ENCODE measurements at regions of chr3 and their contacts with region 1.

Region 1: GRCh38 chr3:31918179-31919168 is 62.6 kb downstream of the OSBPL10 start:
- DNase-seq: no peak
- H3K4me3 Mint-ChIP-seq: peak overlapping the region; percentile 43
- H3K27ac Mint-ChIP-seq: peak overlapping the region; percentile 31
- H3K4me1 Mint-ChIP-seq: peaks cover 53% of the 10 kb centered on the region
- H3K27me3 Mint-ChIP-seq: no peaks in the 10 kb centered on the region
- CTCF ChIP-seq: no peak

Region 2: DNA sequence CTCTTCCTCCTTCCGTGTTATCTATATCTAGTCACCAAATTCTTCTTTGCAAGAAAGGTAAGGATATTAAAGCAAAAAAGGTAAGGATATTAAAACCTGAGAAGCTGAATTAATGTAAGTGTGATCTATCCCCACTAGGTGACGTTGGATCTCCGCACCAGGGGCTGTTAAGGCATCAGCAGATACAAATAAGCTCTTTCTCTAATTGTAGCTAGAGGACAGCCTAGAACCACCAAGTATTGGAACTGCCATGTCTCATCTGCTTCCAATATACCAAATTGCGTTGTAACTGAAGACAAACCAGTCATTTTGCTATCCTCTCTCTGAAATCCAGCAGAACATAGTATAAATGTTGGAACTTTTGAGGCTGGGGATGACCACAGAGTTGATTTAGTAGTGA is 1783.3 kb before region 1 on chr3:
- CTCF ChIA-PET with region 1: no interaction called
- intact Hi-C with region 1: no loop called
- DNase-seq: no peak
- H3K4me3 Mint-ChIP-seq: no peak overlapping the region
- H3K27ac Mint-ChIP-seq: no peak overlapping the region
- H3K4me1 Mint-ChIP-seq: no peaks in the 10 kb centered on the region
- H3K27me3 Mint-ChIP-seq: no peaks in the 10 kb centered on the region
- CTCF ChIP-seq: no peak

Region 3: GRCh38 chr3:31671976-31672375 is 246.5 kb before region 1 on chr3:
- CTCF ChIA-PET with region 1: interaction called, 12 read pairs
- intact Hi-C with region 1: no loop called
- DNase-seq: no peak
- H3K4me3 Mint-ChIP-seq: no peak overlapping the region
- H3K27ac Mint-ChIP-seq: no peak overlapping the region
- H3K4me1 Mint-ChIP-seq: peaks cover 7% of the 10 kb centered on the region
- H3K27me3 Mint-ChIP-seq: no peaks in the 10 kb centered on the region
- CTCF ChIP-seq: no peak

Region 4: GRCh38 chr3:31704591-31705179 is 213.8 kb before region 1 on chr3:
- CTCF ChIA-PET with region 1: no interaction called
- intact Hi-C with region 1: no loop called
- DNase-seq: peak; percentile 82
- H3K4me3 Mint-ChIP-seq: peak overlapping the region; percentile 57
- H3K27ac Mint-ChIP-seq: peak overlapping the region; percentile 61
- H3K4me1 Mint-ChIP-seq: peaks cover 21% of the 10 kb centered on the region
- H3K27me3 Mint-ChIP-seq: no peaks in the 10 kb centered on the region
- CTCF ChIP-seq: no peak

Region 5: DNA sequence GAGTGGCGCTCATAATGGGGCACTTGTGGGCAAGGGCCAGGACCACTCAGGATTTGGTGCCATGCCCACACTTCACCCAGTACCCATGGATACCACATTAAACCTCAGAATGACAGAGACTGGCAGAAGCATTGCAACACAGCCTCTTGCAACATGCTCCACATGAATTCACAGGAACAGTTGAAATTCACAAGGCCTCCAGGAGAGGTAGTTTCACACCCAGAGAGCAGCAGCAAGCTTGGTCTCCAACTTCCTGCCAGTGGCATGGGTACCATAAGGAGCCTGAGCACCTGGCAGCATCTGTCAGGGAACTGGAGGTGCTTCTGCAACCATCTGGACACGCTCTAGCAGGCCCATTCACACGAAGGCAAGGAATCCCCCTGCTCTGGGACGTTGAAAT is 38.5 kb before region 1 on chr3:
- CTCF ChIA-PET with region 1: no interaction called
- intact Hi-C with region 1: no loop called
- DNase-seq: peak; percentile 18
- H3K4me3 Mint-ChIP-seq: no peak overlapping the region
- H3K27ac Mint-ChIP-seq: no peak overlapping the region
- H3K4me1 Mint-ChIP-seq: peaks cover 25% of the 10 kb centered on the region
- H3K27me3 Mint-ChIP-seq: no peaks in the 10 kb centered on the region
- CTCF ChIP-seq: no peak

Region 6: GRCh38 chr3:31981206-31982181 is 63.0 kb after region 1 on chr3 and contains the starts of genes OSBPL10 and ZNF860:
- CTCF ChIA-PET with region 1: interaction called, 4 read pairs
- intact Hi-C with region 1: loop called (anchors 5 kb)
- DNase-seq: peak; percentile 91
- H3K4me3 Mint-ChIP-seq: peak within 1 kb of the TSS; percentile 93
- H3K27ac Mint-ChIP-seq: peak within 1 kb of the TSS; percentile 91
- H3K4me1 Mint-ChIP-seq: peaks cover 32% of the 10 kb centered on the region
- H3K27me3 Mint-ChIP-seq: no peaks in the 10 kb centered on the region
- CTCF ChIP-seq: no peak
- total RNA-seq, gene OSBPL10: 53.3 and 74.7 TPM in 2 replicates
- total RNA-seq, gene ZNF860: 7.5 and 11.8 TPM in 2 replicates